H1 (cell line): ENCODE measurements at regions of chr3 and their contacts with region 1.

Region 1: GRCh38 chr3:179071550-179072397 is at the start of gene ZMAT3:
- DNase-seq: peak; percentile 53 to 89
- H3K4me3 ChIP-seq: peak within 1 kb of the TSS; percentile 69 to 86 (median 80)
- H3K27ac ChIP-seq: 0 out of 2 replicates have a peak within 1 kb of the TSS, but pooled peaks have one; percentile 43
- H3K4me1 ChIP-seq: peaks cover 0 to 7% (median 4%) of the 10 kb centered on the region in 4 experiments; a peak in 3 of 7 replicates
- H3K27me3 ChIP-seq: peaks cover 0 to 2% (median 0%) of the 10 kb centered on the region in 4 experiments; a peak in 2 of 7 replicates
- CTCF ChIP-seq: no peak
- EP300 ChIP-seq: no peak
- POLR2A ChIP-seq: peak in 1 of 2 experiments; percentile 64; a peak in 1 of 3 replicates
- RAD21 ChIP-seq: no peak; a peak in 1 of 4 replicates
- total RNA-seq, gene ZMAT3: 9.2 and 10.4 TPM in 2 replicates

Region 2: DNA sequence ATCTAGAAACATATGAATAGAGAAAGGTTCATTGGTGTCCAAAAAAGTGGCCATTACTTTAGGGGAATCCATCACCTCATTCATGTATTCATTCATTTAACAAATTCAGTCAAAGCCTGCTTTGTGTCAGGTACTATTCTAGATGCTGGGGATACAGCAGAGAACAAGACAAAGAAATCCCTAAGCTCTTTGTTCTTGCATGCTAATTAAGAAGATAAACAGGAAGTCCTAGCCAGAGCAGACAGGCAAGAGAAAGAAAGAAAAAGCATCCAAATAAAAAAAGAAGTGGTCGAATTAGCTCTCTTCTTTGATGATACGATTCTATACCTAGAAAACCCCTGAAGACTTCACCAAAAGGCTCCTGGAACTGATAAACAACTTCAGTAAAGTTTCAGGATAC is 12.2 kb after region 1 on chr3:
- CTCF ChIA-PET with region 1: interaction called, 35 read pairs
- POLR2A ChIA-PET with region 1: no interaction called
- DNase-seq: no peak
- H3K4me3 ChIP-seq: no peak overlapping the region; a peak in 1 of 8 replicates
- H3K27ac ChIP-seq: no peak overlapping the region
- H3K4me1 ChIP-seq: peaks cover 1 to 9% (median 3%) of the 10 kb centered on the region in 4 experiments; a peak in 3 of 7 replicates
- H3K27me3 ChIP-seq: no peaks in the 10 kb centered on the region
- CTCF ChIP-seq: no peak
- EP300 ChIP-seq: no peak
- POLR2A ChIP-seq: no peak
- RAD21 ChIP-seq: no peak